Transverse colon (tissue), 4 donors: ENCODE measurements at regions of chr7 and their contacts with region 1.

Region 1: GRCh38 chr7:71286336-71286735 is 154.4 kb downstream of the GALNT17 start:
- DNase-seq: peak; percentile 12
- H3K4me3 ChIP-seq: no peak overlapping the region
- H3K27ac ChIP-seq: peak overlapping the region in 3 of 4 donors; percentile 23 to 55 (median 25)
- H3K4me1 ChIP-seq: peaks cover 0 to 6% (median 2%) of the 10 kb centered on the region in 4 donors
- H3K27me3 ChIP-seq: no peaks in the 10 kb centered on the region
- CTCF ChIP-seq: no peak
- EP300 ChIP-seq: no peak
- POLR2A ChIP-seq: no peak

Region 2: GRCh38 chr7:70829221-70830059 is 456.9 kb before region 1 on chr7:
- in situ Hi-C with region 1: no loop called
- intact Hi-C with region 1: no loop called
- DNase-seq: peak; percentile 60
- H3K4me3 ChIP-seq: peak overlapping the region in 1 of 4 donors; percentile 10
- H3K27ac ChIP-seq: no peak overlapping the region
- H3K4me1 ChIP-seq: peaks cover 0 to 5% (median 2%) of the 10 kb centered on the region in 4 donors
- H3K27me3 ChIP-seq: no peaks in the 10 kb centered on the region
- CTCF ChIP-seq: peak; percentile 73 to 92 (median 88)
- EP300 ChIP-seq: no peak
- POLR2A ChIP-seq: no peak

Region 3: DNA sequence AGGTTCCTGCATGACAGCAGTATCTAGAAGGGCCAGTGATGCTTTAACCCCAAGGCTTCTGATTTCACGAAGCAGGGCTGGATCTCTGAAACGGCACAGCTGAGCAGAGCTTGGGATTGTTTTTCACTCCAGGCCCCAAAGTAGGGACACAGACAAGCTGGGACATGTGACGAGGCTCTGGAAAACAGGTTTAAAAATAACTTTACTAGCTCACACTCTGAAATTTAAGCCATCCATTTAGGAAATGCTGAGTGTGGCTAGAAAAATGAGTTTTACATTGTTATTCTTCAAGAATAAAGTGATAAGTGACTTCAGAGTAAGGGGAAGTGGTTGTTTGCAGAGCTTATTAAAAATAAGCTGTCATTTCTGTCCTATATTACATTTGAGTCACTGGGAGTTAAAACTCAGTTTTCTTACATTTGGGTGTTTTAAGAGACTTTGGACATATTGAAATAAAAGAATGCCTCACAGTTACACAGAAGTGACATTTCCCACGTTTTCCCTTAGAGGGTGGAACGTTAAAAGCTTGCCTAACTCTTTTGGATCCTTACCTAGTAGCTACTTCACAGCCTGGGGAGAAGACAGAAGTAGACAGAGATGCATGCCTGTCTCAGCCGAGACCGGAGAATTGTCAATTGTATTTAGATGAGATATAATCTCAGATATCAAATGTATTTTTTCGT is 46.6 kb before region 1 on chr7:
- in situ Hi-C with region 1: no loop called
- intact Hi-C with region 1: loop called (anchors 1 kb)
- DNase-seq: no peak
- H3K4me3 ChIP-seq: no peak overlapping the region
- H3K27ac ChIP-seq: peak overlapping the region; percentile 21 to 75 (median 55)
- H3K4me1 ChIP-seq: peaks cover 0 to 9% (median 5%) of the 10 kb centered on the region in 4 donors
- H3K27me3 ChIP-seq: no peaks in the 10 kb centered on the region
- CTCF ChIP-seq: no peak
- EP300 ChIP-seq: no peak
- POLR2A ChIP-seq: no peak

Region 4: GRCh38 chr7:71403202-71403946 is 117.0 kb after region 1 on chr7:
- in situ Hi-C with region 1: no loop called
- intact Hi-C with region 1: no loop called
- DNase-seq: no peak
- H3K4me3 ChIP-seq: no peak overlapping the region
- H3K27ac ChIP-seq: no peak overlapping the region
- H3K4me1 ChIP-seq: no peaks in the 10 kb centered on the region
- H3K27me3 ChIP-seq: no peaks in the 10 kb centered on the region
- CTCF ChIP-seq: no peak
- EP300 ChIP-seq: no peak
- POLR2A ChIP-seq: no peak

Region 5: DNA sequence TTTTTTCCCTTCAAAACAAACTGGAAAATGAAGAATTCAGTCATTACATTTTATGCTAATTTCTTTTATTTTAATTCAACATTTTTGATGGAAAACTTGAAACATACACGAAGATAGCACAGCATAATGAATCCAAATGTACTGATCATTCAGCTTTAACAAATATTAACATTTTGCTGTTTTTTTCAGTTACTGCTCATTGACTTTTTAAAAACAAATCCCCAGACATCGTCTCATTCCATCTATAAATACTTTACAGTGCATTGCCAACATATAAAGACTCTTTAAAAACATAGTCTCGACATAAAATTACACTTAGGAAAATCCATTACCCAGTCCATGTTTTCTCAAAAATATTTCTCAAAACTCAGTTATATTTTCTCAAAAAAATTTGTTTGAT is 297.9 kb after region 1 on chr7:
- in situ Hi-C with region 1: no loop called
- intact Hi-C with region 1: no loop called
- DNase-seq: no peak
- H3K4me3 ChIP-seq: no peak overlapping the region
- H3K27ac ChIP-seq: no peak overlapping the region
- H3K4me1 ChIP-seq: no peaks in the 10 kb centered on the region
- H3K27me3 ChIP-seq: no peaks in the 10 kb centered on the region
- CTCF ChIP-seq: no peak
- EP300 ChIP-seq: no peak
- POLR2A ChIP-seq: no peak